ENCODE measurements at regions of chr11 and their contacts with region 1.

Region 1: GRCh38 chr11:110711776-110712658 is at the start of gene ARHGAP20:
- DNase-seq: peak in 1 of 2 donors; percentile 85
- H3K4me3 ChIP-seq: peak within 1 kb of the TSS; percentile 70 to 87
- H3K27ac ChIP-seq: peak within 1 kb of the TSS; percentile 72 to 80
- H3K4me1 ChIP-seq: peaks cover 0 to 4% of the 10 kb centered on the region in 2 donors
- H3K27me3 ChIP-seq: no peaks in the 10 kb centered on the region
- CTCF ChIP-seq: no peak
- total RNA-seq, gene ARHGAP20: 4.9 TPM

Region 2: GRCh38 chr11:110296226-110297075 is 415.6 kb before region 1 on chr11 and contains the start of gene RDX:
- intact Hi-C with region 1: loop called (anchors 10 kb)
- DNase-seq: peak in 1 of 2 donors; percentile 82
- H3K4me3 ChIP-seq: peak within 1 kb of the TSS; percentile 83 to 95
- H3K27ac ChIP-seq: peak within 1 kb of the TSS; percentile 87 to 95
- H3K4me1 ChIP-seq: peaks cover 5 to 18% of the 10 kb centered on the region in 2 donors
- H3K27me3 ChIP-seq: no peaks in the 10 kb centered on the region
- CTCF ChIP-seq: peak in 1 of 3 experiments; percentile 17
- total RNA-seq, gene RDX: 105 TPM

Region 3: DNA sequence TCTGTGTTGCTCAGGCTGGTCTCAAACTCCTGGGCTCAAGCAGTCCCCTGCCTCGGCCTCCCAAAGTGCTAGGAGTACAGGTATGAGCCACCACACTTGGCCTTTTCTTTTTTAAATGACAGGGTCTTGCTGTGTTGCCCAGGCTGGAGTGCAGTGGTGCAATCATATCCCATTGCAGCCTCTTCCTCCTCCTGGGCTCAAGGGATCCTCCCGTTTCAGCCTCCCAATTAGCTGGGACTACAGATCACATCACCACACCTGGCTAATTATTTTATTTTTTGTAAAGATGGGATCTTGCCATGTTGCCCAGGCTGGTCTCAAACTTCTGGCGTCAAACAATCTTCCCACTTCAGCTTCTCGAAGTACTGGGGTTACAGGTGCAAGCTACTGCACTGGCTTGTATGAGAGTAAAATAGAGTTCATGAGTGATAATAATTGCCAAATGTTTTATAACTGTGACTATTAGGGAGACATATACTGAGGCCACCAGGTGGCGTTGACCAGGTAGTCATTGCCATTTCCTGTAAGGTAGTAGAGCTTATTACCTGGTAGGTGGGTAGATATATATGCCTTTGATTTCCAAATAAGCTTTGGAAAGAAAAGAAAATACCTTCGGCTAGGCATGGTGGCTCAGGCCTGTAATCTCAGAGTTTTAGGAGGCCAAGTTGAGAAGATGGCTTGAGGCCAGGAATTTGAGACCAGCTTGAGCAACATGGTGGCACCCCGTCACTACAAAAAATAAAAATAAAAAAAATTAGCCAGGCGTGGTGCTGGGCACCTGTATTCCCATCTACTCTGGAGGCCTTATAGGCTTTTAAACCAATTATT is 276.9 kb before region 1 on chr11:
- intact Hi-C with region 1: loop called (anchors 5 kb)
- DNase-seq: no peak
- H3K4me3 ChIP-seq: no peak overlapping the region
- H3K27ac ChIP-seq: no peak overlapping the region
- H3K4me1 ChIP-seq: peaks cover 0 to 24% of the 10 kb centered on the region in 2 donors
- H3K27me3 ChIP-seq: no peaks in the 10 kb centered on the region
- CTCF ChIP-seq: peak in 1 of 3 experiments; percentile 15

Region 4: GRCh38 chr11:110679323-110679975 is 32.6 kb before region 1 on chr11:
- intact Hi-C with region 1: no loop called
- DNase-seq: no peak
- H3K4me3 ChIP-seq: no peak overlapping the region
- H3K27ac ChIP-seq: no peak overlapping the region
- H3K4me1 ChIP-seq: no peaks in the 10 kb centered on the region
- H3K27me3 ChIP-seq: no peaks in the 10 kb centered on the region
- CTCF ChIP-seq: no peak

Region 5: DNA sequence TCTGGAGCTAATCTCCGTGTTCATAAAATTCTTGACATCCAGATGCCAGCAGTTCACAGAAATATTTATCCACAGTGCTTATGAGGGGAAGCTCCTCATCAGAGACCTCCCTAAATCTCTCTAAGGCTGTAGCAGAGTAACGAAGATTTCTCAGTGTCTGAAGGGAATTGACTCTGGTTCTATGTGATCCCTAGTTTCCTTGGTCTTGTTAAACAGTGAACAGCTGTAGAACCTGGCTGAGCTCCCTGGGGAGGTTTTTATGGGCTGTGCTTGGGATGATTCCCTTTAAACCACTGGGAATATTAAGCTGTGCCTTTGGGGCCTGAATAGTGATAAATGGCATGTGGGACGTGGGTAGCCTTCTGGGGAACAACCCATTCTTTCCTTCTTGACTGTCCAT is 43.9 kb after region 1 on chr11:
- intact Hi-C with region 1: no loop called
- DNase-seq: no peak
- H3K4me3 ChIP-seq: no peak overlapping the region
- H3K27ac ChIP-seq: no peak overlapping the region
- H3K4me1 ChIP-seq: no peaks in the 10 kb centered on the region
- H3K27me3 ChIP-seq: no peaks in the 10 kb centered on the region
- CTCF ChIP-seq: no peak

Region 6: GRCh38 chr11:110777775-110778174 is 65.8 kb after region 1 on chr11:
- intact Hi-C with region 1: loop called (anchors 2 kb)
- DNase-seq: peak in 1 of 2 donors; percentile 68
- H3K4me3 ChIP-seq: no peak overlapping the region
- H3K27ac ChIP-seq: peak overlapping the region; percentile 69 to 72
- H3K4me1 ChIP-seq: peaks cover 8 to 10% of the 10 kb centered on the region in 2 donors
- H3K27me3 ChIP-seq: no peaks in the 10 kb centered on the region
- CTCF ChIP-seq: no peak

Region 7: GRCh38 chr11:111206472-111206871 is 494.5 kb after region 1 on chr11:
- intact Hi-C with region 1: no loop called
- DNase-seq: no peak
- H3K4me3 ChIP-seq: no peak overlapping the region
- H3K27ac ChIP-seq: peak overlapping the region; percentile 63 to 66
- H3K4me1 ChIP-seq: peaks cover 0 to 11% of the 10 kb centered on the region in 2 donors
- H3K27me3 ChIP-seq: no peaks in the 10 kb centered on the region
- CTCF ChIP-seq: no peak

Region 8: DNA sequence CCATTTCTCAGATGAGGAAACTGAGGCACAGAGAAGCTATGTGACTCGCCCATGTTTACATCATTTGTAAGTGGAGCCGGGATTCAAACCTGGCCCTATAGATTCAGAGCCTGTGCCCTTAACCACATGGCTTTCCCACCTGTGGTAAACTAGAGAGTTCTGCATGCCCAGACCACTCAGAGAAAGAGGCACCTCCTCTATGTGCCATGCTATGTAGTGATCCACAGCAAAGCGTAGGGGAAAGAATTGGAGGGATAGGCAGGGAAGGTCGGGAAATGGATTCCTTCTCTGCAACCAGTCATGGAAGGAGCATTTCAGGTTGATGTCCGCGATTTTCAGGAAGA is 518.1 kb after region 1 on chr11:
- intact Hi-C with region 1: loop called (anchors 5 kb)
- DNase-seq: no peak
- H3K4me3 ChIP-seq: peak overlapping the region; percentile 46 to 54
- H3K27ac ChIP-seq: no peak overlapping the region
- H3K4me1 ChIP-seq: peaks cover 0 to 2% of the 10 kb centered on the region in 2 donors
- H3K27me3 ChIP-seq: no peaks in the 10 kb centered on the region
- CTCF ChIP-seq: no peak

Measured in ascending aorta (tissue), 2 donors.